ENCODE measurements at regions of chr2 and their contacts with region 1.

Region 1: GRCh38 chr2:119826370-119826961 is 66.7 kb downstream of the PTPN4 start:
- DNase-seq: peak in 3 of 10 donors; percentile 35 to 49 (median 42)
- H3K4me3 ChIP-seq: no peak overlapping the region
- H3K27ac ChIP-seq: peak overlapping the region in 5 of 59 donors; percentile 5 to 64 (median 27)
- H3K27me3 ChIP-seq: no peaks in the 10 kb centered on the region
- CTCF ChIP-seq: peak in 54 of 56 donors; percentile 10 to 72 (median 48)

Region 2: GRCh38 chr2:119641562-119642258 is 184.8 kb before region 1 on chr2:
- intact Hi-C with region 1: loop called in 1 of 2 experiments (anchors 2 kb)
- DNase-seq: peak; percentile 60 to 87 (median 82)
- H3K4me3 ChIP-seq: peak overlapping the region in 41 of 59 donors; percentile 6 to 42 (median 33)
- H3K27ac ChIP-seq: peak overlapping the region in 43 of 59 donors; percentile 1 to 80 (median 52)
- H3K27me3 ChIP-seq: no peaks in the 10 kb centered on the region
- CTCF ChIP-seq: peak; percentile 60 to 99 (median 96)

Region 3: GRCh38 chr2:119702918-119703401 is 123.5 kb before region 1 on chr2:
- intact Hi-C with region 1: loop called in 1 of 2 experiments (anchors 1 kb)
- DNase-seq: peak in 9 of 10 donors; percentile 60 to 87 (median 69)
- H3K4me3 ChIP-seq: no peak overlapping the region
- H3K27ac ChIP-seq: peak overlapping the region in 2 of 59 donors; percentile 6 to 18
- H3K27me3 ChIP-seq: no peaks in the 10 kb centered on the region
- CTCF ChIP-seq: peak; percentile 71 to 99 (median 95)

Region 4: GRCh38 chr2:119753041-119753929 is 73.2 kb before region 1 on chr2:
- intact Hi-C with region 1: loop called (anchors 2 to 5 kb)
- DNase-seq: peak in 1 of 10 donors; percentile 30
- H3K4me3 ChIP-seq: no peak overlapping the region
- H3K27ac ChIP-seq: peak overlapping the region in 1 of 59 donors; percentile 24
- H3K27me3 ChIP-seq: no peaks in the 10 kb centered on the region
- CTCF ChIP-seq: peak in 55 of 56 donors; percentile 21 to 84 (median 62)

Region 5: DNA sequence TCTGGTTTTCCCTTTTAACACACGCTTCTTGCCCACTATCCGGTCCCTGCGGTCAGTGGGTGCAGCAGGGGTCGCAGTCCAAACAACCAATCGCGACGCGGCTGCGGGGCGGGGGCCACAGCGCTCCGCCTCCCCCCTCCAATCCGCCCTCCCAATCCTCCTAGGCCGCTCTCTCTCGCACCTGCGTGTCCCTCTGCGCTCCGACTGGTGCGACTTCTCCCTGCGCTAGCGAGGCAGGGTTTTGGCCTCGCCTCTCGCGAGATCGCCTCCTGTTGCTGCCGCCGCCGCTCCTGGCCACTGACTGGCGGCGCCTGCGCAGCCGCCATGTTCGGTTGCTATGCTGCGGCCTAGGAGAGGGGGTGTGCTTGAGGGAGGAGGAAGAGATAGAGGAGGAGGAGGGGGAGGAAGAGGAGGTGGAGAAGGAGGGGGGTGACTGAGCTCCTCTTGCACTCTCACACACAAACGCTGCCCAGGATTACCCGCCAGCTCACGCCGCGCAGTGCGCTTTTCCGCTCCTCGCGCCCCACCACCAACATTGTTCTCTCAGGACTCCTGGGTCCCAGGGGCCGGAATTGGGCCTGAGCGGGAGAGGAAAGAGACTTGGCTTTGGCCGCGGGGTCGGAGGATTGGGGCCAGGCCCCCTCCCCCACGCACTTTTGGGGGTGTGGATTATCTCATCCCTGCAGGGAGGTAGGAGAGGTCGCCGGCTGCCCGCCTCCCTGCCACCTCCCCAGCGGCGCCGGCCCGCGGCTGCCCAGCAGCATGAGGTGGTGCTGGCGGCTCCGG is 66.8 kb before region 1 on chr2 and contains the start of gene PTPN4:
- intact Hi-C with region 1: loop called in 1 of 2 experiments (anchors 5 kb)
- DNase-seq: peak; percentile 73 to 95 (median 91)
- H3K4me3 ChIP-seq: peak within 1 kb of the TSS; percentile 72 to 98 (median 87)
- H3K27ac ChIP-seq: peak within 1 kb of the TSS; percentile 84 to 99 (median 96)
- H3K27me3 ChIP-seq: no peaks in the 10 kb centered on the region
- CTCF ChIP-seq: peak in 30 of 56 donors; percentile 6 to 54 (median 30)
- total RNA-seq, gene PTPN4: 78.4 to 183 (median 137) TPM

Region 6: GRCh38 chr2:119921825-119922224 is 95.4 kb after region 1 on chr2:
- intact Hi-C with region 1: no loop called
- DNase-seq: no peak
- H3K4me3 ChIP-seq: no peak overlapping the region
- H3K27ac ChIP-seq: no peak overlapping the region
- H3K27me3 ChIP-seq: no peaks in the 10 kb centered on the region
- CTCF ChIP-seq: no peak

Measured in dorsolateral prefrontal cortex (tissue), 120 donors.